ENCODE measurements at regions of chr3 and their contacts with region 1.

Region 1: GRCh38 chr3:152322756-152323155 is 54.0 kb downstream of the MBNL1 start:
- DNase-seq: no peak
- H3K4me3 Mint-ChIP-seq: no peak overlapping the region
- H3K27ac Mint-ChIP-seq: peak overlapping the region; percentile 21
- H3K4me1 Mint-ChIP-seq: peaks cover 79% of the 10 kb centered on the region
- H3K27me3 Mint-ChIP-seq: no peaks in the 10 kb centered on the region

Region 2: DNA sequence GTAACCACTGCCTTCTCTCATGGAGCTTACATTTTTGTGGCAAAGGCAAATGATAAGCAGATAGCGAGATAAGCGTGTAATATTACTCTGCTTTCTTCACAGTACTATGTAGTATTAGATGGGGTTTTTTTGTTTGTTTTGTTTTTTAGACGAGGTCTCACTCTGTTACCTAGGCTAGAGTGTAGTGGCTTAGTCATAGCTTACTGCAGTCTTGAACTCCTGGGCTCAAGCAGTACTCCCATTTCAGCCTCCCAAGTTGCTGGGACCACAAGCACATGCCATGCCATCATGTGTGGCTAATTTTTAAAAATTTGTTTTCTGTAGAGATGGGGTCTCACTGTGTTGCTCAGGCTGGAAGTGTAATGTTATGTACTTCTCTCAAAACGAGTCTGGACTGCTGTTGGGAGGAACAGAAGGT is 31.1 kb before region 1 on chr3:
- CTCF ChIA-PET with region 1: interaction called, 3 read pairs
- intact Hi-C with region 1: loop called (anchors 5 kb)
- DNase-seq: no peak
- H3K4me3 Mint-ChIP-seq: peak overlapping the region; percentile 19
- H3K27ac Mint-ChIP-seq: peak overlapping the region; percentile 68
- H3K4me1 Mint-ChIP-seq: peaks cover 75% of the 10 kb centered on the region
- H3K27me3 Mint-ChIP-seq: no peaks in the 10 kb centered on the region

Region 3: GRCh38 chr3:152309535-152310307 is 13.0 kb before region 1 on chr3:
- CTCF ChIA-PET with region 1: no interaction called
- intact Hi-C with region 1: loop called (anchors 2 kb)
- DNase-seq: no peak
- H3K4me3 Mint-ChIP-seq: no peak overlapping the region
- H3K27ac Mint-ChIP-seq: peak overlapping the region; percentile 21
- H3K4me1 Mint-ChIP-seq: peaks cover 81% of the 10 kb centered on the region
- H3K27me3 Mint-ChIP-seq: no peaks in the 10 kb centered on the region

Measured in activated naive CD4-positive, alpha-beta T cell treated with anti-CD3 and anti-CD28 coated beads for 36 hours (primary cell).